Posterior vena cava (tissue), 2 donors: ENCODE measurements at regions of chr1 and their contacts with region 1.

Region 1: DNA sequence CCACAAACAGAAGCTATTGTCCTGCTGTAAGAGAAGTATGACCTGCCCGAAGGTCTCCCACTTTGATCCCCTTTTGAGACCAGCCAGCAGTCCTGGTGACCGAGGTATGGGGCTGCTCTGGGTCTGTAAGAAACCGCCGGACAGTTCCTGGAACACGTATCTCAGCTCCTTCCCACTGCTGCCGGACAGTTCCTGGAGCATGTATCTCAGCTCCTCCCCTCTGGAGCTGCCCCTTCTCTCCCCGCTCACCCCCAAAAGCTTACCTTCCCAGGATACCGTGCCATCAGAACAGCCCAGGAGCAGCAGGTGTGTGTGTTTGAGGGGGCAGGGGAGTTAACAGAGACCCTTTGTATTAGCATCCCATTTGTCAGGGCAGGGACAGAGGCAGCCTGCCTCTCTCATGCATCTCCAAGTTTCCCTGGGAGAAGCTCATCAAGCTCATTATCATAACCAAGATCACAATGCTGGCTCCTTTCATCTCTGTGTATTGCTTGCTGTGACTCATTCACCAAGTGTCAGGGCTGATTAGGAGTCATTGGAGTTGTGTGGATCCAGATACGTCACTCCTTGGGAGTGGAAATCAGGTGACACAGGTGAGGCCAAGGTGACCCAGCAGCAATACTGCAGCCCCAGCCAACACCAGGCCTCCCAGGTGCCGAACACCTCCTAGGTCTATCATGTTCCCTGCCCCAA is 25.3 kb downstream of the OPTC start:
- DNase-seq: peak; percentile 16

Region 2: GRCh38 chr1:203547771-203548421 is 28.7 kb after region 1 on chr1:
- intact Hi-C with region 1: loop called in 1 of 2 experiments (anchors 1 kb)
- DNase-seq: no peak

Region 3: DNA sequence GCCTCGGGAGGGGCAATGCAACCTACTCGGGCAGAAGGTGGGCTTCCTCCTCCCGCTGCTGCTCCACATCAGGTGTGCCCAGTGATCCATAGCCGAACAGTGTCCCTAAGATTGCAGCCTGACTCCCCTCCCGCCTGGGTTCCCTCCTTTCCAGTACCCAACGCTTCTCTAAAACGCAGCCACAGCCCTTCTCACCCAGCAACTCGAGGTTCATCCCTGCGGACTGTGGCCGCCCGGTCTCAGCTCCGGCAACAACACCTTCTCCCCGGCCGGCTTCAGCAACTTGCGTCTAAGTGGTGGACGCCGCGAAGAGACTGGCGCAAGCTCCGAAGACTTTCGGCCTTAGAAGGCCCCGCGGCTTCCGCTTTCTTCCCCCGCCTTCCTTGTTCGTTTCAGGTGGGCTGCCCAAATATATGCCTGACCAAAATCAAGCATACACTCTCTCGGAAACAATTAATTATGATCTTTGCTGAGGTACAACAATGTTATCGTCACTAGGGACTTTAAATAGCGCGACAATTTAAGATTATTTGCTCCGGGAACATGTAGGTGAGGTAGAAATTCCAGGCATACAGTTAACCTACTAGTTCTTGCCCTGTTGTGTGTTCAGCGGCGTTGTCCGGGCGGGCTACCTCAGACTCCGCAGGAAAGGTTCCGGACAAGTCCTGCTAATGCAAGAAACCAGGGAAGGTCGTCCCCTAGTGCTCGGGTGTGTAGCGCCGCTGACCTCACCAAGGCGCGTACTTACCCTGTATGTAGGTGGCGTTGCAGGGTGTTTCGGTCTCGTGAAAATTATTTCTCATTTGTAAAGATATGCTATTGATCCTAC is 1602.7 kb after region 1 on chr1 and contains the start of gene RBBP5:
- intact Hi-C with region 1: no loop called
- DNase-seq: peak; percentile 98
- total RNA-seq, gene RBBP5: 8.3 to 10.2 TPM